AG04449 (cell line): ENCODE measurements at regions of chr20 and their contacts with region 1.

Region 1: GRCh38 chr20:18287915-18288748 is at the start of gene ZNF133:
- DNase-seq: no peak
- H3K4me3 ChIP-seq: peak within 1 kb of the TSS; percentile 94
- CTCF ChIP-seq: peak; percentile 2

Region 2: DNA sequence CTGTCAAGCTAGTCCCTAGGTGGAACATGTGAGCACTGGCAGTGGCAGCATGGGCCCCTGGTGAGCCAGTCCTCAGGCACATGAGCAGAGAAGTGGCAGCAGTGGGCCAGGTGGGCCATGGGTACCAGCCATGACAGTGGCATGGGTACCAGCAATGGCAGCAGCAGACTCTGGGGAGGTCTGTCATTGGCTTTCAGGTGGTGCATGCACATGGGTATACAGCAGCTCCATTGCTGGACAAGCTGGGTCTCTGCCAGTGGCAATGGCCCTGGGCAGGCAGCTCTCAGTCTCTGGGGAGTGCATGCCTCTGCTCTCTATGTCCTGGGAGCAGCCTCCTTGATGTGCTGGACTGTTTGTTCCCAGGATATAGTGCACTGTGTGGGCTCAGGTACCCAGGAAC is 85.2 kb before region 1 on chr20:
- CTCF ChIA-PET with region 1: no interaction called
- POLR2A ChIA-PET with region 1: no interaction called
- DNase-seq: no peak
- H3K4me3 ChIP-seq: no peak overlapping the region
- CTCF ChIP-seq: no peak

Region 3: DNA sequence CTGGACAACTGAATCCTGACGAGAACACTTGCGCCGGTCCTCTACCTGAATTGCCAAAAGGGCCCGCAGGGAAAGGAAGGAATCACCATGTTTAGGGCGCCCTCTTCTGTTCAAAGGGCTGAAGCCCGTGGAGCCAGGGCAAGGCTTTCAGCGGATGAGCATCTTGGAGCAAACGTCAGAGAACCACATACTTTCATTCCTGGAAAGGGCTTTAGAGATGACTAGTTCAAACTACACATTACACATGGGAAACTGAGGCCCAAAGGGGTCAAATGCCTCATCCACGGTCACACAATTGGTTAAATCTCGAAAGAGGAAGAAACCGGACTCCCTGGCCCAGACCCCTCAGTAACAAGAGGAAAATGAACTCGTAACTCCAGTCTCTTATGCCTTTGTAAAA is 11.3 kb before region 1 on chr20:
- CTCF ChIA-PET with region 1: interaction called, 29 read pairs
- POLR2A ChIA-PET with region 1: no interaction called
- DNase-seq: no peak
- H3K4me3 ChIP-seq: no peak overlapping the region
- CTCF ChIP-seq: peak; percentile 88